GM10248 (cell line): ENCODE measurements at regions of chr12 and their contacts with region 1.

Region 1: DNA sequence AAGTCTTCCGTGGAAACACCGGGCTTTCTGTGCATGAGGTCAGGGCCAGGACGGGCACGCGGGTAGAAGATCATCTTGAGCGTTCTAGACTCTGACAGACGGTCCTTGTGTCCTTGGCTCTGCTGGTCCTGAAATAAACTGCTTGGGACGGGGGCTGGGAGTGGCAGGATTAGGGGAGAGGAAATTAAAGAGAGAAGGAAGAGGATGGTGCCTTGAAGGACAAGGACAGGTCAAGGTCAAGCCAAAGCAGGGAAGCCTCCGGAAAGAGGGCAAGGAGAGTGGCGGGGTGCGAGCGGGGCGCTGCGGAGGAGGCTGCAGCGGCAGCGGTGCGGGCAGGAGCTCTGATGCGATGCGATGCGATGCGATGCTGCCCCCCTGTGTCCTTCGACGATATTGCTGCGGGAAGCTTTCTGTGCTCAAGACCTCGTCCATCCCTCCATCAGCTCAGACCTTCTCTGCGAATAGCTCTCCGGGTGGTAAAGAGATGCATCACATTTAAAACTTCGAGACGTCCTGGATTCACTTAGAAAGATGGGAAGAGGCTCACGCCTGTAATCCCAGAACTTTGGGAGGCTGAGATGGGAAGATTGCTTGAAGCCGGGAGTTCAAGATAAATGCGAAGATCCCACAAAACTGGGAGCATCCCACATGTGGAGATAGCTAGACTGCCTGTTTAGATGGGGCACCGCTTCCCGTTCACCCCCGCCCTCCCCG is 110.1 kb upstream of the TMEM132D start:
- DNase-seq: peak; percentile 64
- CTCF ChIP-seq: peak; percentile 64

Region 2: DNA sequence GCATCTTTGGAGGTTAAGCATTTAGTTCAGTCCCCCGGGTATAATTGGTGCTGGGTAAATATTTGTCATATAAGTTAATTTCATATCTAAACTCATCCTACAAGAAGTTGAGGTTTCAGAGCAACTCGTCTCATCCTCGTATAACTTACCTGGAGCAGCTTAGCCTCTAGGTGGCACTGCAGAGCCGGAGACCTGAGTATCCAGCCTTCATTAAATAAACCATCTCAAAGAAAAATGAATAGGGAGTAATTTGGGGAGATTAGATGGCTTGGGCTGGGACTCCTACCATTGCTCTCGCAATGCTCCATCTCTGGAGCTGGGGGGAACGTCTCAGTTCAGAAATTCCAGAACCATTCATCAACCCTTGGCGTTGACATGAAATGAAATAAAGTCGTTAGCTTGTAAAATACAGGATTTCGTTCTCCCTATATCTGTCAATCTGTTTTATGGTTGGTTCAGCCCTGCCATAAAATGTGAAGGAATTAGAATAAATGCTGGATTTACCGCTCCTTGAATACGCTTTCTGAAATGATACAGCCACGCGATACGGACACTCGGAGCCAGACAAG is 12.8 kb after region 1 on chr12:
- CTCF ChIA-PET with region 1: interaction called, 19 read pairs
- POLR2A ChIA-PET with region 1: no interaction called
- DNase-seq: no peak
- CTCF ChIP-seq: peak; percentile 69

Region 3: DNA sequence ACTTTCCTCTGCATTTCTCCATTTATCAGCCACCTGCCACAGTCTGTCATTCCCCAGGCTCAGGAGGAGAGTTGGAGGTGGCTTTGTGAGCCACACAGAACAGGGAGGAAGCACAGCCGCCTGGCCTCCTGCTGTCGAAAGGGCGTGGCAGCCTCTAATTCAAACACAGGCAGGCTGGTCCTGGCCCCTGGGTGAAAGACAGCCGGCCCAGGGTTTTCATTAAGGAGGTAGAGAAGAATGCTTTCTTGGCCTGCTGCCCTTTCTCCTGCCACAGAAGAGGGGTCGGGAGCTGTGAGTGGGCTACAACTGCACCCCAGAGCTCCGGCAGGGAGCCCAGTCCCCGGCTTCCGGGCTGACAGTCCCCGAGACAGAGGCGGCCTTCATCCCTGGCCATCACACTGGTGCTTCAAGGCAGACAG is 39.7 kb after region 1 on chr12:
- CTCF ChIA-PET with region 1: no interaction called
- POLR2A ChIA-PET with region 1: no interaction called
- DNase-seq: no peak
- CTCF ChIP-seq: no peak